PC-9 (cell line): ENCODE measurements at regions of chr17 and their contacts with region 1.

Region 1: GRCh38 chr17:48718227-48718760 is 4.0 kb downstream of the PRAC1 start:
- DNase-seq: no peak
- H3K4me3 ChIP-seq: no peak overlapping the region
- H3K27ac ChIP-seq: no peak overlapping the region
- H3K4me1 ChIP-seq: no peaks in the 10 kb centered on the region
- H3K27me3 ChIP-seq: peaks cover 28% of the 10 kb centered on the region; the same call in 1 of the 2 replicates
- CTCF ChIP-seq: no peak

Region 2: DNA sequence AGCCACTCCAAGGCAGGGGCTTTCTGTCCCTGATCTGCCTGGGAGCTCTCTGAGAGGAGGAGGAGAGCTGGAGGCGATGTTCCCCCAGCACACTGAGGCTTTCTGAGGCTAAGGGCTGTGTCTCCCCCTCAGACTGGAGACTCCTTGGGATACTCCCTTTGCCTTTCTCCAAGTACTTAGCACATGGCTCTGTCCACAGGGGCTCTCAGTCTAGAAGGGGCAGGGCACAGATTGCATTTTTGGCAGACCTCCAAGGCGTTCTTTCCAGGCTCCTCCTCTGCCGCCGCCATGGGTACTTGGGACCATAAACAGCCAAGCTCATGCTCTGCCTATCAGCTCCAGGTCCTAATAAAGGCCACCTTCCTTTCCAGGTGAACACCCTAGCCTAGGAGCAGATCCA is 251.9 kb after region 1 on chr17:
- CTCF ChIA-PET with region 1: interaction called, 14 read pairs
- POLR2A ChIA-PET with region 1: no interaction called
- intact Hi-C with region 1: no loop called
- DNase-seq: peak in 1 of 2 experiments; percentile 26
- H3K4me3 ChIP-seq: no peak overlapping the region
- H3K27ac ChIP-seq: no peak overlapping the region
- H3K4me1 ChIP-seq: peaks cover 27% of the 10 kb centered on the region
- H3K27me3 ChIP-seq: no peaks in the 10 kb centered on the region
- CTCF ChIP-seq: no peak

Region 3: GRCh38 chr17:49016788-49017463 is 298.6 kb after region 1 on chr17:
- CTCF ChIA-PET with region 1: no interaction called
- POLR2A ChIA-PET with region 1: interaction called, 10 read pairs
- intact Hi-C with region 1: no loop called
- DNase-seq: peak in 1 of 2 experiments; percentile 80
- H3K4me3 ChIP-seq: no peak overlapping the region
- H3K27ac ChIP-seq: no peak overlapping the region
- H3K4me1 ChIP-seq: peaks cover 18% of the 10 kb centered on the region
- H3K27me3 ChIP-seq: no peaks in the 10 kb centered on the region
- CTCF ChIP-seq: no peak